ENCODE measurements at regions of chr6 and their contacts with region 1.

Region 1: DNA sequence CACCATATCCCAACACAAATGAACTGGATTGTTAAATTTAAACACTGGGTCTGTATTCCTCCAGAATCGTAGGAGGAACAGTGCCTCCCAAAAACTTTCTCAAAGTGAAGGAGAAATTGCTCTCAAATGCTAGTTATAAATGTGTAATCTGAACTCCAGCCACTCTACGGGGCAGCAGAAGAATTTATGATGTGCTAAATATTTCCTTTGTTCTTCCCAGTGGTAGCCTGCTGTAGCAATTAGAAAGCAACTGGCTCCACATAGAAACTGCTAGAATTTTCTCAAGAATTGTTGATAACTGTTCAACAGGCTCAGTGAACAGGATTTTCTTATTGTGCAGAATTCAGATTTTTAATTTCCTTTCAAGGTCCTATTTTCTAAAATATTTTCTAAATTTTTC is 49.8 kb upstream of the EYA4 start:
- DNase-seq: no peak
- H3K4me3 ChIP-seq: no peak overlapping the region
- H3K27ac ChIP-seq: no peak overlapping the region
- H3K4me1 ChIP-seq: no peaks in the 10 kb centered on the region
- H3K27me3 ChIP-seq: no peaks in the 10 kb centered on the region
- CTCF ChIP-seq: no peak

Region 2: DNA sequence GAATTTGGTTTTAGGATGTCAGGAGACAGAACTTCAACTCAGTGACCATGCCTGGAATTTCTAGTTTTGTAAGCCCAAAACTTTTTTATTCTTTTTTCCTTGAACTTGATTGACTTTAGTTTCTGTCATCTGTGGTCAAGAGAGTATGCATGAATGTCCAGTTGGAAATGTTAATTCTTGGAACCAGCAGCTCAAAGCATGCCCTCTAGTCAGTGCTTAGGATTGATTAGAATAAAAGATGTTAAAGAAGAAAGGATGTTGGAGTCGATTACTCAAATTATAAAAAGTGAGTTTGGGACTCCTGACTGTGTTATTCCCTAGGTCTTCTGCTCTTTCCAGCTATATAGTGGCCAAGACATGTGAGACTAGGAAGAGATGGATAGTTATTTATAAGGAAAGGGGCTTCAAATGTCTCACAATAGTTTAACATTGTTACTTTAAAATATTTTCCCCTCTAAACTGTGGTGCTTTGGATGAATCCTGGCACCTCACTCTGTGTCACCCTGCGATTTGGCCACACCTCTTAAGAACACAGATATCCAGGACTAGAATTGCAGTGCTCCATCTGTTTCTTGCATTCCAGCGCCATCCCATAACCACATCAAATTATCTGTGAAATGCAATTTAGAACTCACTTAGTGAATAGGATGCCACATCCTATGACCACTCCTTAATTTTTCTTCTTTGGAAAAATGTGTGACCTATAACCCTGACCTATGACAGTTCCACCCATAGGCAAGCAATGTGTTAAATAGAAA is 348.4 kb after region 1 on chr6:
- CTCF ChIA-PET with region 1: interaction called, 16 read pairs
- POLR2A ChIA-PET with region 1: no interaction called
- intact Hi-C with region 1: no loop called
- DNase-seq: no peak
- H3K4me3 ChIP-seq: no peak overlapping the region
- H3K27ac ChIP-seq: no peak overlapping the region
- H3K4me1 ChIP-seq: 0 out of 2 replicates have a peak, but pooled peaks cover 6% of the 10 kb centered on the region
- H3K27me3 ChIP-seq: no peaks in the 10 kb centered on the region
- CTCF ChIP-seq: no peak

Measured in PC-9 (cell line).